ENCODE measurements at regions of chr9 and their contacts with region 1.

Region 1: DNA sequence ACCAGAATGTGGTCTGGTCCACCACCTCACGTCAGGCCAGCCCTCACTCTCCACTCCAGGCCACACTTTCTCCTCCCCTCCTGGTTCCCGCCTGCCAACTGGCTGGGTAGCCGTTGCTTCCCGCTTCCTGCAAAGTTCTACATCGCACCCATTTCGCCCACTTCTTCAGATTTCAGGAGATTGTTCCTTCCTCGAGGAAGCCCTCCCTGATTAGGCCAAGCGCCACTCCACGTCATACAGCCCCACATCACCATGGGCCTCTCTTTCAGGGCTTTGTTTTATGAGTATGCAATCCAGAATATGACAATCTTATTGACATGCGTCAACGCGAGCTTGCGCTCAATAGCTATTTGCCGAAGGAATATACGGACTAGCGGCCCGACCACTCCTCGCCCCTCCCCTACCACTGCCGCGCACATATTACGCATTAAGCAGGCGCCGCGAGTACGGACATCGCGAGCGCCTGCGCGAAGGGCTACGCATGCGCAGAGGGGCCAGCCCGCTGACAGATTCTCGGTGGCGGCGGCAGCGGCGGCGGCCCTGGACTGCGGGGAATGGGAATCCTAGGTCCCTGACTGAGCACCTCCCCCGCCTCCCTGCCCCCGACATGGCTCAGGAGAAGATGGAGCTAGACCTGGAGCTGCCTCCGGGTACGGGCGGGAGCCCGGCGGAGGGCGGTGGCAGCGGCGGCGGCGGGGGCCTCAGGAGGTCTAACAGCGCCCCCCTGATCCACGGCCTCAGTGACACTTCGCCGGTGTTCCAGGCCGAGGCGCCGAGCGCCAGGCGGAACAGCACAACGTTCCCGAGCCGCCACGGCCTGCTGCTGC is 74.7 kb downstream of the PIP5K1B start:
- DNase-seq: peak; percentile 96
- H3K4me3 Mint-ChIP-seq: no peak overlapping the region
- H3K27ac Mint-ChIP-seq: no peak overlapping the region
- H3K4me1 Mint-ChIP-seq: peaks cover 8% of the 10 kb centered on the region
- H3K27me3 Mint-ChIP-seq: no peaks in the 10 kb centered on the region

Region 2: GRCh38 chr9:68584189-68585033 is 195.4 kb before region 1 on chr9:
- CTCF ChIA-PET with region 1: no interaction called
- intact Hi-C with region 1: loop called (anchors 1 kb)
- DNase-seq: peak; percentile 93
- H3K4me3 Mint-ChIP-seq: no peak overlapping the region
- H3K27ac Mint-ChIP-seq: no peak overlapping the region
- H3K4me1 Mint-ChIP-seq: no peaks in the 10 kb centered on the region
- H3K27me3 Mint-ChIP-seq: peaks cover 2% of the 10 kb centered on the region

Region 3: DNA sequence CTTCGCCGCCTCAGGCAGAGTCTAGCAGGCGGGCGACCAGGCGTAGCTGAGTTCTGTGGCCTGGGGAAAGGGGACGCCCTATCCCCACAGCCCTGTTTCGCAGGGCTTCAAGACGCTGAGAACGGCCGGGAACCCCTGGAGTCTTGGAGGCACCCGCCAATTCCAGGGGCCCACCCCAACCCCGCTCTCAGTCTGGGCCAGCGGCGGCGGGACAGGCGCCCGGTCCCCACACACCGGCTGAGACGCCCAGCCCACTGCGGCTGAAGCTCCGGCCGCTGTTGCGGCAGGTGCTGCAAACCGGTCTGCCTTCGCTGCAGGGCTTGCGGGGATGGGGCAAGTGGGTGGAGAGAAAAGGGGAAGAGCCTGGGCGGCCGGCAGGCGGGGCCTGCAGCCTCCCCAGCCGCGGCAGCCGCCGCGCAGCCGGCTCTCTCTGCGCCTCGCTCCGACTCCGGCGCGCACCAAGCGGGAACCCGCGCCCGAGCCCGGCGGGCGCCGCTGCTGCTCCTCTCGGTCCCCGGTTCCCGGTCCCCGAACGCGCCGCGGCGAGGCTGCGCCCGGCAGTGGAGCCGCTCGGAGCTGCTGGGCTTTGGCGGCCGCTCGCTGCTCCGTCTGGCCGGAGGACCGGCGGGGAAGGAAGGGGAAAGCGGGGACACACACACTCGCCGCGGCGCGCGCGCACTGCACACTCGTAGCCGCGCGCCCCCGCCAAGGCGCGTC is 74.8 kb before region 1 on chr9 and contains the start of gene PIP5K1B:
- CTCF ChIA-PET with region 1: no interaction called
- intact Hi-C with region 1: loop called (anchors 2 kb)
- DNase-seq: peak; percentile 62
- H3K4me3 Mint-ChIP-seq: peak within 1 kb of the TSS; percentile 82
- H3K27ac Mint-ChIP-seq: no peak within 1 kb of the TSS
- H3K4me1 Mint-ChIP-seq: peaks cover 17% of the 10 kb centered on the region
- H3K27me3 Mint-ChIP-seq: peaks cover 68% of the 10 kb centered on the region
- total RNA-seq, gene PIP5K1B: 0.38 to 0.42 TPM

Region 4: DNA sequence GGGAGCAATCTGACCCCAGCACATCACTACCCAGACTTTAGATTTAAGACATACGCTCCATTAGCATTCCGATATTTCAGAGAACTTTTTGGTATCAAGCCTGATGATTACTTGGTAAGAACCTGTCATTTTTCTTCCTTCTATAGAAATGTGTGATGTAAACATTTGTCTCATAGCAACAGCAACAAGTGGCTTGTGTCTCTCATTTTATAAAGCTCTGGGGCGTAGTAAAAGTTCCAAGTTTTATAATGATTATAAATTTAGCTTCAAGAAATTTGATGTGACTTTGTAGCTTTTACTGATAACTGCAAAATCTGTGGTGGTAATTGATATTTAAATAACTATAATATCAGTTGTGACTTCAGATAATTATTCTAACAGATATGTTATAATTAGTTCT is 96.9 kb after region 1 on chr9:
- CTCF ChIA-PET with region 1: no interaction called
- intact Hi-C with region 1: no loop called
- DNase-seq: no peak
- H3K4me3 Mint-ChIP-seq: no peak overlapping the region
- H3K27ac Mint-ChIP-seq: no peak overlapping the region
- H3K4me1 Mint-ChIP-seq: no peaks in the 10 kb centered on the region
- H3K27me3 Mint-ChIP-seq: no peaks in the 10 kb centered on the region

Region 5: GRCh38 chr9:68895741-68896478 is 116.1 kb after region 1 on chr9:
- CTCF ChIA-PET with region 1: no interaction called
- intact Hi-C with region 1: loop called (anchors 1 kb)
- DNase-seq: no peak
- H3K4me3 Mint-ChIP-seq: peak overlapping the region; percentile 61
- H3K27ac Mint-ChIP-seq: peak overlapping the region; percentile 89
- H3K4me1 Mint-ChIP-seq: peaks cover 42% of the 10 kb centered on the region
- H3K27me3 Mint-ChIP-seq: no peaks in the 10 kb centered on the region

Region 6: GRCh38 chr9:69027355-69028096 is 247.8 kb after region 1 on chr9:
- CTCF ChIA-PET with region 1: interaction called, 3 read pairs
- intact Hi-C with region 1: loop called (anchors 1 kb)
- DNase-seq: peak; percentile 65
- H3K4me3 Mint-ChIP-seq: no peak overlapping the region
- H3K27ac Mint-ChIP-seq: no peak overlapping the region
- H3K4me1 Mint-ChIP-seq: peaks cover 36% of the 10 kb centered on the region
- H3K27me3 Mint-ChIP-seq: no peaks in the 10 kb centered on the region

Region 7: DNA sequence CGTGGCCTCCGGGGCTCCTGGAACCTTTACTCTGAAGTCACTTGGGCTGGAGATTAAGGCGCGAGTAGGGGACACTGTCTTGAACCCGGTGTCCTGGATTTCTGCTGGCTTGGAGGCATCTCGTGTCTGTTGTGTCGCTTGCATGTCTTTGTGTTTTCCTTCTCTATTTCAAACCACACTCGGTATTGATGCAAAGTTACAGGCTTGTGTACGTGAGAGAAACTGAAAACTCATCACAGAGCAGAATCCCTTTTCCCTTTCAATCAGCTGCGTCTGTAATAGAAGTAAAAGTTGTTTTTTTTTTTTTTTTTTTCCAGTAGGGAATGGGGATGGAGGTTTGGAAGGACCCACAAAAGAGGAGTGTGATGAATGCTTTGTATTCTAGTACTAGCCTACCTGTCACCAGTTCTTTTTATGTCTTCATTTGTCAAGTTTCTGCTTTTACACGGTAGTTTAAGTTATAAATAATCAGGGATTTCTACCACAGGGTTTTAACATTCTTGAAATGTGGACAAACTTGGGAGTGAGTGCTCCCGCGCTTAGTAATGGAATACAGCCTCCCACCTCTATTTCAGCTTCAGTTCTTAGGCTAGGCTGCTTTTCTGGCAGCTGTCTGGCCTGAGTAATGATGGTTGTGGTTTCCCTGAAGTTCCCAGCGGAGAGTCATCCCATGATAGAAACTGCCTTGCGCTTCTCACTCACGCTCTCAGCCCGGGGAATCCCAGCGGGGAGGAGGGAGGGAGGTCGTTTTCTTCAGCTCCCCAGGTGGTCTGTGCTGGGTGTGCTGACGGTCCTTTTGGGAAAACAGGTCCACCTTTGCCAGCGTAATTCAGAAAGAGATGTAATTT is 395.1 kb after region 1 on chr9:
- CTCF ChIA-PET with region 1: no interaction called
- intact Hi-C with region 1: loop called (anchors 5 kb)
- DNase-seq: peak; percentile 84
- H3K4me3 Mint-ChIP-seq: peak overlapping the region; percentile 77
- H3K27ac Mint-ChIP-seq: peak overlapping the region; percentile 37
- H3K4me1 Mint-ChIP-seq: peaks cover 39% of the 10 kb centered on the region
- H3K27me3 Mint-ChIP-seq: peaks cover 43% of the 10 kb centered on the region